Activated CD8-positive, alpha-beta T cell treated with anti-CD3 and anti-CD28 coated beads for 36 hours (primary cell): ENCODE measurements at regions of chr19 and their contacts with region 1.

Region 1: DNA sequence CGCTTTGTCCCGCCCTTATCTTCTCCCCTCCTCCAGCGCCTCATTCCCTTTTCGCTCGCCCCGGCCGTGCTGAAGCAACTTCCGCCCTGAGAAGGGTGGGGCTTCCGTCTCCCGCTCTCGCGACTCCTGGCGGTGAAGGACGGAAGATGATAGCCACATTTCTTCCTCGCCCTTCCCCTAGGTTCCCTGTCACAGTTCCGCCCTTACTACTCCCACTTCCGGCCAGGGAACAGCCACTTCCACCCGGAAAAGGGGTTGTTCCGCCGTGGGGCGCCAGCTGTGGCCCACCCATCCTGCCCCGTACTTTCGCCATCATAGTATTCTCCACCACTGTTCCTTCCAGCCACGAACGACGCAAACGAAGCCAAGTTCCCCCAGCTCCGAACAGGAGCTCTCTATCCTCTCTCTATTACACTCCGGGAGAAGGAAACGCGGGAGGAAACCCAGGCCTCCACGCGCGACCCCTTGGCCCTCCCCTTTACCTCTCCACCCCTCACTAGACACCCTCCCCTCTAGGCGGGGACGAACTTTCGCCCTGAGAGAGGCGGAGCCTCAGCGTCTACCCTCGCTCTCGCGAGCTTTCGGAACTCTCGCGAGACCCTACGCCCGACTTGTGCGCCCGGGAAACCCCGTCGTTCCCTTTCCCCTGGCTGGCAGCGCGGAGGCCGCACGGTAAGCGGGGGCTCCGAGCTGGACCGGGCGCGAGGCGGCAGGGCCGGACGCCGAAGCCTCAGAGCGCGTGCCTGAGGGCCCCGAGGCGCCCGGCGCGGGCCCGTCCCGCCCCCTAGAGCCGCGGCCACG is at the start of gene RPS19:
- DNase-seq: peak; percentile 98
- ATAC-seq: peak; percentile 90
- H3K4me3 Mint-ChIP-seq: peak within 1 kb of the TSS; percentile 83
- H3K27ac Mint-ChIP-seq: peak within 1 kb of the TSS; percentile 96
- H3K4me1 Mint-ChIP-seq: peaks cover 39% of the 10 kb centered on the region
- H3K27me3 Mint-ChIP-seq: no peaks in the 10 kb centered on the region
- CTCF ChIP-seq: peak; percentile 65
- total RNA-seq, gene RPS19: 3,454 to 3,479 TPM

Region 2: GRCh38 chr19:41883821-41884733 is 24.3 kb after region 1 on chr19:
- CTCF ChIA-PET with region 1: interaction called, 16 read pairs
- POLR2A ChIA-PET with region 1: interaction called, 59 read pairs
- intact Hi-C with region 1: no loop called
- DNase-seq: peak; percentile 94
- ATAC-seq: peak; percentile 73
- H3K4me3 Mint-ChIP-seq: peak overlapping the region; percentile 73
- H3K27ac Mint-ChIP-seq: peak overlapping the region; percentile 94
- H3K4me1 Mint-ChIP-seq: peaks cover 50% of the 10 kb centered on the region
- H3K27me3 Mint-ChIP-seq: no peaks in the 10 kb centered on the region
- CTCF ChIP-seq: no peak

Region 3: DNA sequence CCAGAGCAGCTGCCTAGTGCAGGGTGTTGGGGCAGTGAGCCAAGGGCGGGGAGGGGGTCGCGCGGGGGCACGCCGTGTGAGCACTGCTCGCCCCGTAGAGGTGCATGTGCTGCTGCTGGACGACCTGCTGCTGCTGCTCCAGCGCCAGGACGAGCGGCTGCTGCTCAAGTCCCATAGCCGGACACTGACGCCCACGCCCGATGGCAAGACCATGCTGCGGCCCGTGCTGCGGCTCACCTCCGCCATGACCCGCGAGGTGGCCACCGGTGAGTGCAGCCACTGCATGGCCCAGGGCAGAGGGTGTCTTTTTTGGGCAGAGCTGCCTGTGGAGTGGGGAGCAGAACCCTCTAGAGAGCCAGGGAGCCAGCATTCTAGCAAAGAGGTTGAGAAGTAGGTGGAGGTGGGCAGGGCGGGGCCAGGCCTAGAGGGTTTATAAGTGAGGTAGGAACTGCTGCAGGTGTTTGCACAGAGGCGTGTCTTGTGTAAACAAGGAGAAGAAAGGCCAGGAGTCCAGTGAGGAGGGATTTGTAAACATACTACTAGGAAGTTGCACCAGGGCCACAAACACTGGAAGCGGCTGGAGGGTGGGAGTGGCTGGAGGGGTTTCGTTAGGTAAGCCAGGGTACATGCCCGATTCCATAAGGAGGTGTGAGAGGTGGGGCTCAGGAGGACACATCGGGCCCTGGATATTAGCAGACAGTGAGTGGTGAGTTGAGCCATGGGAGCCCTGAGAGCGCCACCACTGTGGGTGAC is 44.5 kb after region 1 on chr19:
- CTCF ChIA-PET with region 1: no interaction called
- POLR2A ChIA-PET with region 1: interaction called, 12 read pairs
- intact Hi-C with region 1: no loop called
- DNase-seq: no peak
- ATAC-seq: no peak
- H3K4me3 Mint-ChIP-seq: no peak overlapping the region
- H3K27ac Mint-ChIP-seq: peak overlapping the region; percentile 48
- H3K4me1 Mint-ChIP-seq: peaks cover 47% of the 10 kb centered on the region
- H3K27me3 Mint-ChIP-seq: no peaks in the 10 kb centered on the region
- CTCF ChIP-seq: no peak

Region 4: GRCh38 chr19:41945135-41945766 is 85.4 kb after region 1 on chr19:
- CTCF ChIA-PET with region 1: interaction called, 24 read pairs
- POLR2A ChIA-PET with region 1: interaction called, 39 read pairs
- intact Hi-C with region 1: no loop called
- DNase-seq: peak; percentile 99
- ATAC-seq: peak; percentile 87
- H3K4me3 Mint-ChIP-seq: peak overlapping the region; percentile 56
- H3K27ac Mint-ChIP-seq: peak overlapping the region; percentile 94
- H3K4me1 Mint-ChIP-seq: peaks cover 61% of the 10 kb centered on the region
- H3K27me3 Mint-ChIP-seq: peaks cover 8% of the 10 kb centered on the region
- CTCF ChIP-seq: no peak

Region 5: GRCh38 chr19:41959056-41960053 is 99.5 kb after region 1 on chr19 and contains the start of gene RABAC1:
- CTCF ChIA-PET with region 1: interaction called, 10 read pairs
- POLR2A ChIA-PET with region 1: interaction called, 21 read pairs
- intact Hi-C with region 1: no loop called
- DNase-seq: peak; percentile 94
- ATAC-seq: peak; percentile 89
- H3K4me3 Mint-ChIP-seq: peak within 1 kb of the TSS; percentile 82
- H3K27ac Mint-ChIP-seq: peak within 1 kb of the TSS; percentile 84
- H3K4me1 Mint-ChIP-seq: peaks cover 16% of the 10 kb centered on the region
- H3K27me3 Mint-ChIP-seq: no peaks in the 10 kb centered on the region
- CTCF ChIP-seq: peak; percentile 55
- total RNA-seq, gene RABAC1: 49.6 to 52.4 TPM